ENCODE measurements at regions of chr16 and their contacts with region 1.

Region 1: GRCh38 chr16:31700526-31701388 is 172.8 kb upstream of the ZNF267 start:
- DNase-seq: peak; percentile 49
- ATAC-seq: peak; percentile 99
- H3K4me3 ChIP-seq: peak overlapping the region; percentile 98
- H3K27ac ChIP-seq: peak overlapping the region; percentile 10; the same call in 1 of the 2 replicates
- H3K4me1 ChIP-seq: no peaks in the 10 kb centered on the region
- H3K27me3 ChIP-seq: no peaks in the 10 kb centered on the region; the same call in 1 of the 2 replicates
- CTCF ChIP-seq: 0 out of 2 replicates have a peak, but pooled peaks have one; percentile 12
- POLR2A ChIP-seq: no peak
- RAD21 ChIP-seq: no peak

Region 2: GRCh38 chr16:30949650-30950515 is 750.9 kb before region 1 on chr16:
- CTCF ChIA-PET with region 1: no interaction called
- POLR2A ChIA-PET with region 1: no interaction called
- dilution Hi-C with region 1: no loop called
- in situ Hi-C with region 1: no loop called
- intact Hi-C with region 1: loop called (anchors 5 kb)
- DNase-seq: peak; percentile 80
- ATAC-seq: peak; percentile 47
- H3K4me3 ChIP-seq: peak overlapping the region; percentile 79
- H3K27ac ChIP-seq: peak overlapping the region; percentile 68
- H3K4me1 ChIP-seq: peaks cover 7% of the 10 kb centered on the region
- H3K27me3 ChIP-seq: no peaks in the 10 kb centered on the region
- CTCF ChIP-seq: no peak
- POLR2A ChIP-seq: peak; percentile 59; the same call in 1 of the 2 replicates
- RAD21 ChIP-seq: no peak

Region 3: GRCh38 chr16:31215287-31216162 is 485.2 kb before region 1 on chr16:
- CTCF ChIA-PET with region 1: no interaction called
- POLR2A ChIA-PET with region 1: no interaction called
- dilution Hi-C with region 1: no loop called
- in situ Hi-C with region 1: no loop called
- intact Hi-C with region 1: loop called (anchors 10 kb)
- DNase-seq: peak; percentile 55
- ATAC-seq: peak; percentile 97
- H3K4me3 ChIP-seq: peak overlapping the region; percentile 27
- H3K27ac ChIP-seq: no peak overlapping the region
- H3K4me1 ChIP-seq: peaks cover 4% of the 10 kb centered on the region; the same call in 1 of the 2 replicates
- H3K27me3 ChIP-seq: peaks cover 57% of the 10 kb centered on the region
- CTCF ChIP-seq: no peak
- POLR2A ChIP-seq: no peak
- RAD21 ChIP-seq: no peak

Region 4: DNA sequence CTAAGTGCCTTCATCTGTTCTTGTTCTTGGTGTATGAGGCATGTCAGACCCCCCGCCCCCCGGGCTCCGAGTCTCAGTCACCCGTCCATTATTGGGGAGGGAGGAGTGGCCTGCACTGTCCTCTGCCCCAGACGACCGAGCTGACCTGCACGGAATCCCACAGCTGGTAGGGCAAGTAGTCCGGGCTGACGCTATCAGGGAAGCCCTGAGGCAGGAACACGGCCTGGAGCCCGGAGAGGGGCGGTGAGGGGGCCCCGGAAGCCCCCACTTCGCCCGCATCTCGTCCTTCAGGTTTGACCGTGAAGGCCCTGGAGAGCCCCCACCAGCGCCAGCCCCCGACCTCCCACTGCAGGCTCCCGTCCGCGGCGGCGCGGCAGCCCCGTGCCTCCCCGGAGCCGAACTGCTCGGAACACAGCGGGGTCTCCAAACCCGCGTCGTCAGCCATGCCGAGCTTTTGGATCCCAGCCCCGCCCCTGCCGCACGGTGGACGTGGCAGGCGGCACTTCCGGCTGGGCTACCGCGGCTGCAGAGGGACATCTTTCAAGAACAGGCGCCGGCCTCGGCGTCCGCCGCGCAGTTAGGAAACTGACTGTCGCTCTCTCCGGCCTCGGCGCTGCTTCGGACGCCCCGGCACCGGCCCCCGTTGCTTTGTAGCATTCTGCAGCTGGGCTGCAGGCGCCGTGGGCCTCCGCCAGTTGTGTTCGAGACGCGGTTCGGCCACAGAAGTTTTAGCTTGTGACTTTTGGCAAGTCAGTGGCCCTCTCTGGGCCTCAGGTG is 192.6 kb before region 1 on chr16 and contains the start of gene RUSF1:
- CTCF ChIA-PET with region 1: no interaction called
- POLR2A ChIA-PET with region 1: no interaction called
- dilution Hi-C with region 1: no loop called
- in situ Hi-C with region 1: loop called (anchors 25 kb)
- intact Hi-C with region 1: loop called (anchors 1 kb)
- DNase-seq: peak; percentile 87
- ATAC-seq: peak; percentile 93
- H3K4me3 ChIP-seq: peak within 1 kb of the TSS; percentile 94
- H3K27ac ChIP-seq: peak within 1 kb of the TSS; percentile 99
- H3K4me1 ChIP-seq: peaks cover 5% of the 10 kb centered on the region
- H3K27me3 ChIP-seq: no peaks in the 10 kb centered on the region
- CTCF ChIP-seq: no peak
- POLR2A ChIP-seq: peak; percentile 94
- RAD21 ChIP-seq: no peak
- total RNA-seq, gene RUSF1: 22.2 and 22.9 TPM in 2 replicates

Region 5: GRCh38 chr16:31764103-31764502 is 63.3 kb after region 1 on chr16:
- CTCF ChIA-PET with region 1: no interaction called
- POLR2A ChIA-PET with region 1: no interaction called
- dilution Hi-C with region 1: no loop called
- in situ Hi-C with region 1: loop called (anchors 10 kb)
- intact Hi-C with region 1: no loop called
- DNase-seq: no peak
- ATAC-seq: no peak
- H3K4me3 ChIP-seq: no peak overlapping the region
- H3K27ac ChIP-seq: no peak overlapping the region
- H3K4me1 ChIP-seq: no peaks in the 10 kb centered on the region
- H3K27me3 ChIP-seq: no peaks in the 10 kb centered on the region
- CTCF ChIP-seq: no peak
- POLR2A ChIP-seq: no peak
- RAD21 ChIP-seq: no peak

Region 6: GRCh38 chr16:31868691-31869167 is 168.0 kb after region 1 on chr16:
- CTCF ChIA-PET with region 1: no interaction called
- POLR2A ChIA-PET with region 1: no interaction called
- dilution Hi-C with region 1: no loop called
- in situ Hi-C with region 1: loop called (anchors 10 kb)
- intact Hi-C with region 1: loop called (anchors 2 kb)
- DNase-seq: peak; percentile 72
- ATAC-seq: peak; percentile 79
- H3K4me3 ChIP-seq: no peak overlapping the region
- H3K27ac ChIP-seq: no peak overlapping the region
- H3K4me1 ChIP-seq: peaks cover 6% of the 10 kb centered on the region
- H3K27me3 ChIP-seq: peaks cover 12% of the 10 kb centered on the region
- CTCF ChIP-seq: peak; percentile 76
- POLR2A ChIP-seq: no peak
- RAD21 ChIP-seq: peak; percentile 74